ENCODE measurements at regions of chr11 and their contacts with region 1.

Region 1: DNA sequence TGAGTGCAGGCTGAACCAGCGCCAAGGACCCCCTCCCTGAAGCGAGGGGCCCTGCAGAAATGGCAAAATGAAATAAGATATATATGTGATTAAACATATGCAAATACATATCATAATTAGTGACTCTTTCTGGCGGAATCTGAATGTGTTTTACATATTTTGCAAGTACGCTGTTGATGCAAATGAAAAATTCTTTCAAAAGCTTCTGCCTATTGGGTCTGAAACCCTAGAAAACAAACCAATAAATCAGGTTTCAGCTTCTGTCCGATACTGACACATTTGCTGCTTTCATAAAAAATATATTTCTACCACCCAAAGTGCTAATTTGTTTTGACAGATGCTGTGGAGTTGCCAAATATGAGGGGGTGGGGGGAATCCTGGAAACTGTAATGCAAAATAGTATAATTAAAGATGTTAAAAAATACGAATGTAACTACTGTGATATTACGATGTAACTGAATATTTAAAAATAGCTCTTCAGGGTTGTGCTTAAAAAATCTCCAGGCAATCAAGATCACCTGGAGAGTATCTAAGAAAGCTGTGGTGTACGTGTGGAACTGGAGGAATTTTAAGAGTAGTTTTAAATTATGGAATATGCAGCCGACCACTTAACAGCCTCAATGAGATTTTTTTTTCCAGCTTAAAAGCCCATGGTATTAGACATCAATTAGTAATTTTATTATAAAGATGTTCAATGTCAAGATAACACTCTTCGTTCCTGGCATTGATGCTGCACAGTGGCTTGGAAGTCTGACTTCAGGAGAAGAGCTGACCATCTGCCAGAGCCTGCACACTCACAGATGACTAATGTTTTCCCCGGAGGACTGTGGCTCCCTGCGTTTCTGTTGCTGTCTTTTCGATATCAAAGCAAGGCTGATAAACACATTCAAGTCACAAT is 122.2 kb upstream of the RCN1 start:
- DNase-seq: no peak

Region 2: GRCh38 chr11:31958076-31958735 is 10.5 kb before region 1 on chr11:
- CTCF ChIA-PET with region 1: interaction called, 12 read pairs
- POLR2A ChIA-PET with region 1: no interaction called
- DNase-seq: peak; percentile 77

Region 3: DNA sequence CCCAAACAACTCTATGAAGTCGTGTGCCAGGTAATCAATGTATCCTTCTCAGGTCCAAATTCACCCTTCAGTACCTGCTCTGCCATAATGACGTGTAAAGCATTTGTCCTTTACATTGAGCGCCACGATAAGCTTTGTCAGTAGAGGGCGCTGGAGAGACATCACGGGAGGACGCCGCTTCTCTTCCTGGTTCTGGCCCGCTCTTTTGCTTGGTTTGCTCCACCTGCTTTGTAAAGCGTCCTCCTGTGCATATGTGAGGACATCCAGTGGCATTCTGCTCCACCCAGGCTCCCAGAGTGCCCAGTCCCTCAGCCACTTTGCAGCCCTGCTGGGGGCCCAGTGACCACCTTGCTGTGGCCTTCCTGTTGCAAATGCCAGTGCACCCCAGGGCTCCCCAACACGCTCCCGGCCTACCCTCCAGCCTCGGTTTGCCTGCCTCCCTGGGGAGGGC is 405.6 kb after region 1 on chr11:
- CTCF ChIA-PET with region 1: no interaction called
- POLR2A ChIA-PET with region 1: no interaction called
- DNase-seq: peak; percentile 46

Measured in HEK293T (cell line).